ENCODE measurements at regions of chr20 and their contacts with region 1.

Region 1: DNA sequence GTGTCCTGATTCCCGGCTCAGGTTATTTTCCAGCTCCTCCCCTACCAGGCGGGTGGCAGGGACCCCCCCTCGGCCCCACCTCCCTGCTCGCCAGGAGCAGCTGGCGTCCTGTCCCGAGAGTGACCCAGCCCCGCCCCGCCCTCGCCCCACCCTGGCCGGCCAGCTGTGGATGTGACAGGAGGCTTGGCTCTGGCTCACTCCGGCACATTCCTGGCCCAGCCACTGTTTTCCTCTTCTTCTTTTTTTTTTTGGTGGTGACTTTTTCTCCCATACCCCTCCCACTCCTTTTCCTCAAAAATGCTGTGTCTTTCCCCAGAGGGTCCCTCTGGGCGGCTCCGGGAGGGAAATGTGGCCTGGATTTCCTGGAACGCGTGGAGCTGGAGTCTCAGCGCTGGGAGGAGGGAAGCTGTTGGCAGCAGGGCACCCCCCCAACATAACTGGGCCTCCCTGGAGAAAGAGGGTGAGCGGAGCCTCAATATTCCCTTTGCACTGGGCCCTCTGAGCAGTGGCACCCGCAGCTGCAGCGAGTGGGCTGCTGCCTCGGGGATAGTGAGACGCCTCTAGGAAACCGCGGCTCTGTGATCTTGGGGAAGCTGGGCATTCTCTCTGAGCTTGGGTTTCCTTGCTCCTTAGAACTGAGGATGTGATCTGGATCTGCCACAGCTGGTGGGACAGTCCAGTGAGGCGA is 28.3 kb upstream of the CSNK2A1 start:
- DNase-seq: peak; percentile 86 to 90
- ATAC-seq: peak; percentile 71 to 79 (median 74)
- H3K4me3 ChIP-seq: peak overlapping the region in 6 of 10 donors; percentile 5 to 45 (median 30)
- H3K27ac ChIP-seq: peak overlapping the region; percentile 64 to 92 (median 82)
- H3K4me1 ChIP-seq: peaks cover 30 to 94% (median 74%) of the 10 kb centered on the region in 9 donors
- H3K27me3 ChIP-seq: peaks cover 0 to 45% (median 0%) of the 10 kb centered on the region in 7 donors
- CTCF ChIP-seq: no peak

Region 2: GRCh38 chr20:588932-589672 is 17.2 kb after region 1 on chr20:
- intact Hi-C with region 1: loop called in 1 of 10 experiments (anchors 2 kb)
- DNase-seq: no peak
- ATAC-seq: peak in 7 of 8 donors; percentile 25 to 57 (median 30)
- H3K4me3 ChIP-seq: no peak overlapping the region
- H3K27ac ChIP-seq: peak overlapping the region in 9 of 10 donors; percentile 8 to 88 (median 73)
- H3K4me1 ChIP-seq: peaks cover 7 to 38% (median 28%) of the 10 kb centered on the region in 9 donors
- H3K27me3 ChIP-seq: no peaks in the 10 kb centered on the region
- CTCF ChIP-seq: peak in 1 of 9 donors; percentile 20

Region 3: DNA sequence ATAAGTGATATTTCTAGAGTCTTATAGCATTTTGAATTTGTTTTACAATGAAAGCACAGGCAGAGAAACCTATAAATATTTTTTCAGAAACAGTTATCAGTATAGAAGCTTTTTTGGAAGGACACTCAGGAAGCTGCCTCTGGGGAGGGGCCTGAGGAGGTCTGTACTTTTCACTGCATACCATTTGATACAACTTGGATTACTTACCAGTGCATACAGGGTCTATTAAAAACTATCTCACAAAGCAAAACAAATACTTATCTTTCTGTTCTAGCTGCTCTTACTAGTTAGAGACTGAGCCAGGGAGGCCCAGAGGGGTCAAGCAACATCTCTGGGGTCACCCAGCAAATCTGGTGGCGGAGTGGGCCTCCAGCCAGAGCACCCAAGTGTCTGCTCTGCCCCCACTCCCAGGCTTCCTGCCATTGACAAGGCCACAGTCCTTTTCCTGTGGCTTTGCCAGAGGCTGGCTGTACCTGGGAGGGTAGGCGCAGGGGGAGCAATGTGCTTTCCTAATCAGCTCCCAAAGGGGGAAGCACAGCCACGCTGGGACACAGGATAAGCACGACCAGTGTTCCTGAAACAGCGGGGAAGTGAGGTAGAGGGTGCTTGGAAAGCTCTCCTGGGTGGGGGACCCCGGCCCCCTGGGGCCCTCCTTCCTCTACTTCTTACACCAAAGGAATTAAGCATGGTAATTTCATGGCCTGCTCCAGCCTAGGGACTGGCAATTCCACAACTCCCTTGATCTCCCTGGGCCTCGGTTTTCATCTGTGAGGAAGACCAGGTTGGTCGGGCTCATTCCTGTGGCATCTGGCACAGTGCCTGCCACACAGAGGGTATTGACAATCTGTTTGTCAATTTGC is 30.4 kb after region 1 on chr20:
- intact Hi-C with region 1: loop called in 5 of 10 experiments (anchors 2 to 5 kb)
- DNase-seq: peak; percentile 82 to 83
- ATAC-seq: peak; percentile 74 to 88 (median 84)
- H3K4me3 ChIP-seq: peak overlapping the region in 2 of 10 donors; percentile 20 to 26
- H3K27ac ChIP-seq: peak overlapping the region; percentile 79 to 96 (median 90)
- H3K4me1 ChIP-seq: peaks cover 42 to 97% (median 67%) of the 10 kb centered on the region in 9 donors
- H3K27me3 ChIP-seq: no peaks in the 10 kb centered on the region
- CTCF ChIP-seq: peak in 1 of 9 donors; percentile 24

Region 4: GRCh38 chr20:610130-611046 is 38.5 kb after region 1 on chr20 and contains the start of gene TCF15:
- intact Hi-C with region 1: loop called in 3 of 10 experiments (anchors 5 kb)
- DNase-seq: peak; percentile 67 to 77
- ATAC-seq: peak; percentile 86 to 92 (median 90)
- H3K4me3 ChIP-seq: peak within 1 kb of the TSS; percentile 56 to 77 (median 64)
- H3K27ac ChIP-seq: peak within 1 kb of the TSS; percentile 76 to 94 (median 89)
- H3K4me1 ChIP-seq: peaks cover 6 to 49% (median 23%) of the 10 kb centered on the region in 9 donors
- H3K27me3 ChIP-seq: peaks cover 0 to 50% (median 3%) of the 10 kb centered on the region in 7 donors
- CTCF ChIP-seq: no peak
- total RNA-seq, gene TCF15: 4.6 to 20.5 (median 7.9) TPM

Region 5: GRCh38 chr20:634556-634955 is 62.7 kb after region 1 on chr20:
- intact Hi-C with region 1: no loop called
- DNase-seq: no peak
- ATAC-seq: no peak
- H3K4me3 ChIP-seq: no peak overlapping the region
- H3K27ac ChIP-seq: no peak overlapping the region
- H3K4me1 ChIP-seq: peaks cover 0 to 6% (median 0%) of the 10 kb centered on the region in 9 donors
- H3K27me3 ChIP-seq: no peaks in the 10 kb centered on the region
- CTCF ChIP-seq: no peak

Region 6: GRCh38 chr20:653110-653589 is 81.3 kb after region 1 on chr20 and contains the start of gene SRXN1:
- intact Hi-C with region 1: no loop called
- DNase-seq: peak; percentile 91 to 93
- ATAC-seq: peak; percentile 92 to 96 (median 96)
- H3K4me3 ChIP-seq: peak within 1 kb of the TSS; percentile 36 to 87 (median 76)
- H3K27ac ChIP-seq: peak within 1 kb of the TSS; percentile 86 to 98 (median 93)
- H3K4me1 ChIP-seq: peaks cover 6 to 48% (median 22%) of the 10 kb centered on the region in 9 donors
- H3K27me3 ChIP-seq: no peaks in the 10 kb centered on the region
- CTCF ChIP-seq: peak; percentile 39 to 79 (median 70)
- total RNA-seq, gene SRXN1: 21.4 to 42.0 (median 30.9) TPM

Region 7: DNA sequence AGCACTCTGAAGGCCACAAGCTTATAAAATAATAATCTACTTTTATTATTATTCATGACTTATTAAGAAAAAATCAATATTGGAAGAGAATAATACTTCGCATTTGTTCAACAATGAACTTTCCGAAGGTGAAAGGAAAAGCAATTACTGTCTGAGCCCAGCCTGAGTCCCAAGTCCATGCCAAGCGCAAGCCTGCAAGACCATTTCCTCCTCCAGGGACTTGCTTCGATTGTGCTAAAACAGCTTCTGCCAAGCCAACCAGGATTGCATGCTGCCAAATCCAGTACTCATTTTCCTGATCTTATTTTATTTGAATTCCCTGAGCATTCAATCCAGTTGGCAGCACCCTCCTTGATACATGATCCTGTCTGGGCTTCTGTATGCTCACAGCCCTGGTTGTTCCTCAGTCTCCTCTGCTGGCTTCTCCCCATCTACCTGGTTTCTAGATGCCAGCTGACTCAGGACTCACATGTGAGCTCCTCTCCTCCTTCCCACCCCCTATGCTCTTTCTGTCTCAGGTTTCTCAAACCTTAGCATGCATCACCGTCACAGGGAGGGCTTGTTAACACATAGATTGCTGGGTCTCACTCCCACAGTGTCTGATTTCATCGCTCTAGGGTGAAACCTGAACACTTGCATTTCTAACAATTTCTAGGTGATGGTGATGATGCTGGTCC is 490.6 kb after region 1 on chr20:
- intact Hi-C with region 1: no loop called
- DNase-seq: no peak
- ATAC-seq: no peak
- H3K4me3 ChIP-seq: no peak overlapping the region
- H3K27ac ChIP-seq: no peak overlapping the region
- H3K4me1 ChIP-seq: no peaks in the 10 kb centered on the region
- H3K27me3 ChIP-seq: peaks cover 0 to 5% (median 0%) of the 10 kb centered on the region in 7 donors
- CTCF ChIP-seq: no peak